ENCODE measurements at regions of chr4 and their contacts with region 1.

Region 1: GRCh38 chr4:48127682-48128394 is 6.2 kb downstream of the TXK start:
- DNase-seq: peak; percentile 91
- ATAC-seq: peak; percentile 91
- H3K4me3 ChIP-seq: peak overlapping the region; percentile 37
- H3K27ac ChIP-seq: peak overlapping the region; percentile 31
- H3K4me1 ChIP-seq: peaks cover 30% of the 10 kb centered on the region
- H3K27me3 ChIP-seq: no peaks in the 10 kb centered on the region
- CTCF ChIP-seq: peak; percentile 75

Region 2: DNA sequence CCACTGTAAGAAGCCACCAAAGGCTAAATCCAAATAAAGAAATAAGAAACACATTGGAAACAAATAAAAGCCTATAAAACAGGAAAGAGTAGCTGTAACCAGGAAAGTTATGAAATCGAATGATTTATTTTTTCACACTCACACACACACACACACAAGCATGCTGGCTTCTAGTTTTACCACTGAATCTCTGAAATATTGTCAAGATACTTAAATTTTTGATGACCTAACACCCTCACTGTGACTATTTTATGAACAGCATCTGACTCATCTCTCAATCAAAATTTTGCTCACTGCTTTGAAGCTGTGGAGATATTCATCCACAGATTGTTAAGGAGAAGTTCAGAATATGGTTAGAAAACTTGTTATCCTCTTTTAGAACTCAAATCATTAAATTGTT is 1110.3 kb before region 1 on chr4:
- CTCF ChIA-PET with region 1: no interaction called
- POLR2A ChIA-PET with region 1: no interaction called
- intact Hi-C with region 1: no loop called
- DNase-seq: no peak
- ATAC-seq: no peak
- H3K4me3 ChIP-seq: no peak overlapping the region
- H3K27ac ChIP-seq: no peak overlapping the region
- H3K4me1 ChIP-seq: no peaks in the 10 kb centered on the region
- H3K27me3 ChIP-seq: peaks cover under 1% of the 10 kb centered on the region; the same call in 1 of the 2 replicates
- CTCF ChIP-seq: no peak

Region 3: GRCh38 chr4:48269861-48270522 is 142.2 kb after region 1 on chr4:
- CTCF ChIA-PET with region 1: interaction called, 3 read pairs
- POLR2A ChIA-PET with region 1: no interaction called
- intact Hi-C with region 1: loop called (anchors 5 kb)
- DNase-seq: peak; percentile 85
- ATAC-seq: peak; percentile 85
- H3K4me3 ChIP-seq: peak overlapping the region; percentile 86
- H3K27ac ChIP-seq: peak overlapping the region; percentile 41
- H3K4me1 ChIP-seq: peaks cover 6% of the 10 kb centered on the region; the same call in 1 of the 2 replicates
- H3K27me3 ChIP-seq: no peaks in the 10 kb centered on the region
- CTCF ChIP-seq: no peak